ENCODE measurements at regions of chr11 and their contacts with region 1.

Region 1: GRCh38 chr11:121655537-121656327 is 203.0 kb upstream of the SORL1-AS1 start:
- DNase-seq: peak; percentile 56 to 93
- H3K4me3 ChIP-seq: peak overlapping the region; percentile 53 to 65
- H3K27ac ChIP-seq: peak overlapping the region; percentile 91 to 95
- H3K4me1 ChIP-seq: peaks cover 4 to 8% of the 10 kb centered on the region in 2 donors
- H3K27me3 ChIP-seq: no peaks in the 10 kb centered on the region
- CTCF ChIP-seq: peak; percentile 87 to 96 (median 90)

Region 2: GRCh38 chr11:121634889-121635288 is 20.8 kb before region 1 on chr11:
- intact Hi-C with region 1: no loop called
- DNase-seq: no peak
- H3K4me3 ChIP-seq: no peak overlapping the region
- H3K27ac ChIP-seq: no peak overlapping the region
- H3K4me1 ChIP-seq: peaks cover 0 to 9% of the 10 kb centered on the region in 2 donors
- H3K27me3 ChIP-seq: no peaks in the 10 kb centered on the region
- CTCF ChIP-seq: no peak

Region 3: DNA sequence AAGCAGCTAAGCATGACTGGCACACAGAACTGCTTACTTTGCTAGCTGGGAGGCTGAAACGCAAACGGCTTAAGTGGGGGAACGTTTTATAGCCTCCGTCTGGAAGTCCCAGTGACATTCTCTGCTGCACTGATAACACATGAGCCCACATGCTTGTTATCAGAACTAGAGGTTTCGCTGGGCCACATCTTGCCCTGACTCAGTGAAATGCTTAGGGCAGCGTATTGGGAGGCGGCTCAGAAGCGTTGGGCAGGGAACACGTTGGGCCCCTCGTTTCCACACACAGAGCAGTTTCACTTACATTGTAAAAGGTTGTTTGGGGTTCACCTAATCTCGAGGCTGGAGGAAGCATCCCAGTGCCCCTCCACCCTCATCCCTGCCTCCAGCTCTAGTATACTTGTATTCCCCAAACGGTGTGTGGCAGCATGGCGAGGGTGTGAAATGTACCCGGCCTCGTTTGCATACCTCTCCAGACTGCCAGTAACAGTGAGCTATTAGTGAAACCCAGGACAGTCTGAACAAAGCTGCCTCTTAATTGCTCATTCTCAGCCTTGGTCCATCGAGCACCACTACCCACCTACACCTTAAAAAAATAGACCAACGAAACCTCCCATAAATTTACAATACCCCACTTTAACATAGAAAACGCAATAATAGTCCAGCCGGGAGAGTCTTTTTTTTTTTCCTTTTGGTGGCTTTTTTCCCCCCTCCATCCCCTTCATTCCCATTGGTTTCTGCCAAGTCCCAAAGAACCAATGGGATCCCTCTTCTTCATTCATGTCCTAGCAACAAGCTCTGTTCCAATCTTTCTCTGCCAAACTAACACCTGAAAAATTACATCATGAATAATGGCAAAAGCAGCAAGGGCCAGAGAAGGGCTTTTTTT is 15.8 kb after region 1 on chr11:
- intact Hi-C with region 1: no loop called
- DNase-seq: no peak
- H3K4me3 ChIP-seq: peak overlapping the region in 1 of 2 donors; percentile 34
- H3K27ac ChIP-seq: peak overlapping the region; percentile 74 to 84
- H3K4me1 ChIP-seq: peaks cover 17 to 22% of the 10 kb centered on the region in 2 donors
- H3K27me3 ChIP-seq: no peaks in the 10 kb centered on the region
- CTCF ChIP-seq: no peak

Region 4: DNA sequence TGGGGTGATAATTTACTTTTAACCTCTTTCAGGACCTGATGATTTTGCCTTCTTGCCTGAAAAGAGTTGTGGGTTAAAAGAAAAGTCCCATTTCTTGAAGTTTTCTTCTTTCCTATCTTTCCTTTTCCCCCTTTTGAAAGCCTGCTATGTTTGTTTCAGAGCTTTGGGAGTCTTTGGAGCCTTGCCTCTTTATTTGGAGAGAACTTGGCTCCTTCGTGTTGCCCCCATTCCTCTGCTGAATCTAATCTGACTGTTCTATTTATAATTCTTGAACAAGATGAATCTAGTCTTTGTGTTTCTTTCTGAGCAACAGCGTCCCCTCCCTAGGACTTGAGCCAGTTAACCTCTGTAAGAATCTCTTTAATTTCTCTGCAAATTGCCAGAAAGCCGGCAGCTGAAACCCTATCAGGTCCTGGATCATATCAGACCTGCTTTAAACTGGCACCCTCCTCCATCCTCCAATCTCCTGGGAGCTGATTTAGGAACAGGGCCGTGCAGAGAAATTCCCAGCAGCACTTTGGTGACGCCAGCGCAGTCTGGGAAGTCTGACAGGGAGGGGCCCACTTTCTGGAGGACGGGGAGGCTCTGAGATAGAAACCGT is 86.1 kb after region 1 on chr11:
- intact Hi-C with region 1: loop called (anchors 1 kb)
- DNase-seq: peak; percentile 26 to 95
- H3K4me3 ChIP-seq: peak overlapping the region; percentile 7 to 21
- H3K27ac ChIP-seq: peak overlapping the region; percentile 83 to 90
- H3K4me1 ChIP-seq: peaks cover 9 to 19% of the 10 kb centered on the region in 2 donors
- H3K27me3 ChIP-seq: no peaks in the 10 kb centered on the region
- CTCF ChIP-seq: no peak

Region 5: DNA sequence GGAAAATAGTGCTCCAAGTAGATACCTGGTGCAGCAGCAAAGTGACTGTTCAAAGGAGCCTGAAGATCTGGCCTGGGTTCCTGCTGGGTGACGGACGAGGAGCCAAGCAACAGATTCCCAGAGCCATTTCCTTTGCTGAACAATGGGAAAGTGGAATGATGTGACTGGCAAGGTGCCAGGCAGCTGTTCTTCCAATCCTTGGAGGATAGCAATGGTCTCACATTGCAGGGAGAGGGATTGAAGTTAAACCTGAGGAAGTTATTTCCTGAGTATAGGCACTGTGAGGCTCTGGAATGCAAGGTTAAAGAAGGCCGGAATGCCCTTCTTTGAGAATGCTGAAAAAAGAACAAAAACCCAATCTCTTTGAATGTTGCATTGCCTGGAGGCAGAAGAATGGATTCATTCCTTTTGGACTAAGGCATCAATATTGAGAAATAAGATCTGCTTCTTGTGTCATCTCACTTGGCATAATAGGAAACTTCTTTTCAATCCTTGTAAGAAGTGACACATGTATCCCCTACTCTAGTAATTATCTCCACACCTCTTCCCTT is 236.5 kb after region 1 on chr11:
- intact Hi-C with region 1: loop called (anchors 5 kb)
- DNase-seq: no peak
- H3K4me3 ChIP-seq: no peak overlapping the region
- H3K27ac ChIP-seq: peak overlapping the region in 1 of 2 donors; percentile 15
- H3K4me1 ChIP-seq: peaks cover 13 to 22% of the 10 kb centered on the region in 2 donors
- H3K27me3 ChIP-seq: no peaks in the 10 kb centered on the region
- CTCF ChIP-seq: no peak

Region 6: GRCh38 chr11:122038543-122038942 is 382.8 kb after region 1 on chr11:
- intact Hi-C with region 1: loop called (anchors 5 kb)
- DNase-seq: no peak
- H3K4me3 ChIP-seq: no peak overlapping the region
- H3K27ac ChIP-seq: peak overlapping the region; percentile 25 to 56
- H3K4me1 ChIP-seq: peaks cover 0 to 21% of the 10 kb centered on the region in 2 donors
- H3K27me3 ChIP-seq: no peaks in the 10 kb centered on the region
- CTCF ChIP-seq: no peak

Region 7: DNA sequence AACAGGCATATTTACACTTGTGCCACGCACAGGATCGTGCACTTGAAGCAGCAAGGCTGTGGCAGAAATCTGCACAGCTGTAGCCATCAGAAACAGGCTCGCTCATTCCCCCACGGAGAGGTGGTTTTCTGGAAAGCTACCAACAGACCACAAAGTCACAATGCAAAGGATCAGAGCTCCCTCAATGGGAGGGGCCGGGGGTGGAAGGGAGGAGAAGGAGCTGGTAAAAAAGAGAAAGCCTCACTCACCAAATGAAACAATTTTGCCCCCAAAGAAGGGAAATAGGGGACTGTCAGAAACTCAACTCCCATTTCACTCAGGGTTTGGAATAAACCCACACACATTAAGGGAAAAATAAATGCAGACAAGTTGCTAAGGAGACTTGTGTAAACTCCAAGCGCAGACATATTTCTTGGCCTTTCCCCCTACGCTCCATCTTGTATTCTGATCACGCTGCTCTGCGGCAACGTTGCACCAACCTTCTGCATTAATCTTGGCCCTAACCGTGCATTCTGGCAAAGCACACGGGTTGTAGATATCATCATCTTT is 503.5 kb after region 1 on chr11:
- intact Hi-C with region 1: loop called (anchors 2 kb)
- DNase-seq: no peak
- H3K4me3 ChIP-seq: peak overlapping the region; percentile 32 to 62
- H3K27ac ChIP-seq: peak overlapping the region; percentile 80 to 94
- H3K4me1 ChIP-seq: peaks cover 11 to 38% of the 10 kb centered on the region in 2 donors
- H3K27me3 ChIP-seq: no peaks in the 10 kb centered on the region
- CTCF ChIP-seq: no peak

Region 8: GRCh38 chr11:122309262-122309925 is 653.7 kb after region 1 on chr11:
- intact Hi-C with region 1: loop called (anchors 10 kb)
- DNase-seq: peak in 1 of 2 donors; percentile 67
- H3K4me3 ChIP-seq: peak overlapping the region; percentile 47 to 62
- H3K27ac ChIP-seq: peak overlapping the region; percentile 88 to 89
- H3K4me1 ChIP-seq: peaks cover 0 to 14% of the 10 kb centered on the region in 2 donors
- H3K27me3 ChIP-seq: no peaks in the 10 kb centered on the region
- CTCF ChIP-seq: no peak

Region 9: GRCh38 chr11:122505304-122506006 is 849.7 kb after region 1 on chr11:
- intact Hi-C with region 1: loop called (anchors 1 kb)
- DNase-seq: peak; percentile 38 to 93
- H3K4me3 ChIP-seq: no peak overlapping the region
- H3K27ac ChIP-seq: peak overlapping the region in 1 of 2 donors; percentile 38
- H3K4me1 ChIP-seq: peaks cover 4 to 6% of the 10 kb centered on the region in 2 donors
- H3K27me3 ChIP-seq: no peaks in the 10 kb centered on the region
- CTCF ChIP-seq: peak; percentile 85 to 90 (median 88)

Measured in ascending aorta (tissue), 2 donors.